ENCODE measurements at regions of chr4 and their contacts with region 1.

Region 1: DNA sequence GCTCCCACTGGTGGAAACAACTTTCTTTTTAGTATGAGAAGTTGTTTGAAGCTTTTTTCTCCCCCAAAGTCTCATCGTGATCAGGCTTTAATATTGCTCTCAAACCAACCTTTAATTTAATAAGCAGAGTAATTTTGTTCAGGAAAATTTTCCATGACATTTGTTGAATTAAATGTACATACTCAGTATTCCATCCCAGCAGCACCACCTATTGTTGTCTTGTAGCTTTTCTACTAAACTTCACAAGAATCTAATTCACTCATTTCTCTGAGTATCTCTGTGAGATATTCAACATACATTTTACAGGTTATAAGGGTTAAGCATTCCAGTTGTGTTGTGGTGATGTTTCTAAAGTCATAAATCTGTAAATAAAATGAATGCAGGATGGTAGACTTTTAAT is 218.3 kb upstream of the HAND2 start:
- DNase-seq: no peak

Region 2: DNA sequence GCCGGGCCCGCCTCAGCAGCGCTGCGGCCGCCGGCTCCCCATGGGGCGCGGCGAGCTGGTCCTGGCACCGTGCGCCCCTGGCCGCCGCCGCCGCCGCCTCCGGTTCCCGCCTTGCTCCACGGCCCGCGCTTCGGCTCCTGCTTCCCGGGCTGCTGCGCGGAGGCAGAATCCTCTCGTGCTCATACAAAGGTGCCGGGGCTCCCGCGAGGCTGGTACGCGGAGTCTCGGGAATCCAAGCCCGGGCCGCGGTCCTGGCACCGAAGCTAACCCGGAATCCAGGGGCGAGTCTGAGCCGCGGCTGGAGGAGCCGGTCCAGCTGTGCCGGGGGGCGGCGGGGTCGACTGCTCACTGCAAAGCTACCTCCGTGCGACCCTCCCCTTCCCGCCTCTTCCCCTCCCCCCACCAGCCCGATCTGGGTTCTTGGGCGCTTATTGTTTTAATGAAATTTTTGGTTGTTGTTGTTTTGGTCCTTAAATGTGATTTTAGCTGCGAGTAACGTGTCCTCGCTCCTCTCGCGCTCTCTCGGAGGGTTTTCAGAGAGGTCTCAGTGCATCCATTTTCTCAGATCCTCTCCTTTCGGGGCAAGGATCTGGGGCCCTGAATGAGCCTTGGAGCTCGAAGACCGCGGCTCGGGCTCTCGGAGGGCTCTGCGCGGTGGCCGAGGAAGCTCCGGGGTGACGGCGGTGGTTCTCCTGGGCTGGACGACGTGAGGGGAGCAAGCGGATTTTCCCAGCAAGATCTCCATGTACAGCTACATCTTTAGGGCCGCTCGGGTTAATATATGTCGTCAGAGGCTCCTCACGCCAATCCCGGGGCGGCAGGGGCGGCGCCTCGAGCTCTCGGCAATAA is 218.7 kb before region 1 on chr4 and contains the start of gene HAND2:
- intact Hi-C with region 1: loop called (anchors 2 kb)
- DNase-seq: peak; percentile 90
- total RNA-seq, gene HAND2: 161 TPM

Region 3: DNA sequence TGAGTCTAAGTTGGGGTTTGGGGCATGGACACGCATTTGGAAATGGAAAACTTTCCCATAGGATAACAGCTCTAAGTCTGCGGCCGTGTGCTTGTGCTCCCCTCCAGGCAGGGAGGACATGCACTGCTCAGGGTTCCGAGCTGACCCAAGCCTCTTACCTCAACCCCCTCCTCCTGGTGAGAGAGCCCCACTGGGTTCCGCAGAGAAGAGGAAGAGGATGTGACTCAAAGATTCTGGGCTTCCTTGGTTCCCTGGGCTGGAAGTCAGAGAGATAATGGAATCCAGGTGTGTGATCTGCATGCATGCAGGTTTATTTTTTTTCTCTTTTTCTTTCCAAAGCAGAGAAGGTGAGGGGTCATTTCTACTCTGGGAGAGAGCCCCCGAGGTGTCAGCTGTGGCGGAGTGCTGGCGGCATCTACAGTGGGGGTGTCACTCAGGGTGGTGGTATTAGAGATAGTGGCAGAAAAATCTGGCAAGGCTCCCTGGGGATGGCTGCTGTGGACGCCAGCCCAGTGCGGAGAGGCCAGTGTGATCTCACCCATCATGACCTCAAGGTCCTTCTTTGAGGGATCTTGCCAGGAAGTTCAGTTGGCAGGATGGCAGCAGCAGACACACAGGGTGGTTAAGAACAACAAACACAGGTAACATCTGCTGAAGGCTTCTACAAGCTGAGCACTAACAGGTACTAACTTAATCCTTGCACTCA is 49.6 kb before region 1 on chr4:
- intact Hi-C with region 1: loop called (anchors 2 kb)
- DNase-seq: peak; percentile 88

Region 4: DNA sequence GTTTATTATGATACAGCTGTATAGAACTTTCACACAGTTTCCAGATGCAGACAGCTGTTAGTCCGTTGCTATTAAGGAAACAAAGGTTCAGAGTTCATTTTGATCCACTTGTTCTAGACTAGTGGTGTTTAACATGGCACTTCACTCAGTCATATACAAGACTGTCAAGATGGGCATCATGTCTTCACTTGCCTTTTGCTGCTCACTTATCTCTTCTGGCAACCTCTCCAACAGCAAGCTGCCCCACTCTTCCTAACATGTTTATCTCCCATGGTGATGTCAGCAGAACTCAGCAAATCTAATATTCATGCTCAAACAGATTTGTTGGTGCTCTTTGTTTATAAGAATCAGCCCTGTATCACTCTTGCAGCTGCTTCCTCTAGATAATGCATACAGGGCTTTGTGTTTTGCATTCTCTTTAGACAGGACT is 17.8 kb after region 1 on chr4:
- intact Hi-C with region 1: no loop called
- DNase-seq: no peak

Region 5: GRCh38 chr4:173891072-173891471 is 142.7 kb after region 1 on chr4:
- intact Hi-C with region 1: no loop called
- DNase-seq: no peak

Region 6: GRCh38 chr4:173990126-173990868 is 241.9 kb after region 1 on chr4:
- intact Hi-C with region 1: loop called (anchors 5 kb)
- DNase-seq: no peak

Region 7: DNA sequence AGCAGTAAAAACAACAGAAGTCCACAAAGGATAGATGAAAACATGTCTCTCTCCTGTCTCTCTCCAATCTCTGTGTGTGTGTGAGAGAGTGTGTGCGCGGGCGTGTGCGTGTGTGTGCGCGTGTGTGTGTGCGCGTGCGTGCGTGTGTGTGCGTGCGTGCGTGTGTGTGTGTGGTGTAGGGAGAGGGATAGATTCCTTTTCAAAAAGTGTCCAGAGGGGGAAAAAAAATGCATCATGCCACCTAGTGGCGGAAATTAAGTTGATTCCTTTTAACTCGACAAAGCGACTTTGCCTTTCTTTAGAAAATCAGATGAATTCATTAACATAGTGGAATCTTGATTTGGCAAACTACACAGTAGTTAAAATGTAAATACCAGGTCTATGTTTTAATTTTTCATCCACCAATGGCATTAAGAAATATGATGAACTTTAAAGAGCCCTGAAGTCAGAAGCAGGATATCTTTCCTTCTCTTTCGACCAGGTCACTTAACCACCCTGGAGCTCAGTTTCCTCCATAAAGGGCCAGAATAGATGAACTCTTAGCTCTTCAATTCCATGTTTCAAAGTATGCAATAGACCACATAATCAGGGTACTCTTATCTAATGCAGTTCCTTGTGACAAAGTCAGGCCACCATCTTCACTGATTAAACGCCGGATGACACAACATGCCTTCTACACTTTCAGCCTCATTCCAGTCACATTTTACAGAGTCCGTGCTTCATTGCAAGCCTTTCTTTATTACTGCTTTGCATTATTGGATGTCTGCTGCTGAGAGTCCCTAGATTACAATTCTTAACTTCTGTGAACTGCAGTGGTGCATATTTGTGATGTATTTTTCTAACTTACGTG is 372.3 kb after region 1 on chr4:
- intact Hi-C with region 1: loop called (anchors 10 kb)
- DNase-seq: no peak

Measured in cardiac septum (tissue), 1 donor.